ENCODE measurements at regions of chr19 and their contacts with region 1.

Region 1: DNA sequence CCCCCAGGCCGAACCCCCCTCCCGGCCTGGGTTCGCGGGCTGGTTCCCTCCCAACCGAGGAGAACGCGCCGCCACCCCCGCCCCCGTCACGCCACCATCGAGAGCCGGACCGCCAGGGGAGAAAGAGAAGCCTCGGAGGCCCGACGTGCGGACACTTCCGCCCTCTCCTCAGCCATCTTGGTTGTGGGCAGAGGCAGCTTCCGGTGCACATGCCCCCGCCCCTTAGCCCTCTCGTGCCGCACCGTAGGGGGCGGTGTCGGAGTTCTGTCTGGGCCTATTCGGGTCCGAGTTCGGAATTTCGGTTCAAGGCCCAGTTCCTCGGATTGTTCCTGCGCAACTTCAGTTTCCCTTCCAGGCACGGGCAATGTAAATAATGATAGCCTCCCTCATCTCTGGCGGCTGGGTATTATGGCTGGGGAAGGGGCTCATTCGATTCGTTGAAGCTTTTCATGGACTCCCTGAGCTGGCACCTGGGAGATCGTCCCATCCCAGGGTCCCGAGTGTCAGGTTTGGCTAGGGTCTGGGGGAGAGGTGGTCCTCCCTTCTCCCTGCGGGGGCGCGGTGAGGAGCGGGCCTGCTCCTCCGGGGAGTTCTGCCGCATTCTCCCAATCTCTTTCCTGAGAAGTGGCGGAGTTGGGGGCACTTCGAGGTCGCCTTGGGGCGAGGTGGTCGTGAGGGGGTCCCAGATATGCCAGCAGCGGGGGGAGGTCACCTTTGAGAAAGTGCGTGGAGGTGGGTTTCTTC is at the starts of genes IER2 and STX10:
- DNase-seq: peak in 1 of 2 experiments; percentile 91
- H3K4me3 ChIP-seq: peak within 1 kb of the TSS; percentile 87 to 97 (median 94)
- H3K27ac ChIP-seq: peak within 1 kb of the TSS; percentile 79
- H3K4me1 ChIP-seq: peaks cover 0 to 6% (median 3%) of the 10 kb centered on the region in 4 experiments; a peak in 3 of 7 replicates
- H3K27me3 ChIP-seq: no peaks in the 10 kb centered on the region; a peak in 1 of 7 replicates
- CTCF ChIP-seq: peak in 1 of 3 experiments; percentile 33; a peak in 2 of 4 replicates
- EP300 ChIP-seq: peak in 1 of 2 experiments; percentile 43; a peak in 1 of 3 replicates
- POLR2A ChIP-seq: no peak; a peak in 1 of 3 replicates
- RAD21 ChIP-seq: peak; percentile 12 to 18; a peak in 2 of 4 replicates
- total RNA-seq, gene IER2: 137 and 138 TPM in 2 replicates
- total RNA-seq, gene STX10: 50.8 and 53.0 TPM in 2 replicates

Region 2: GRCh38 chr19:12956446-12957388 is 193.6 kb before region 1 on chr19 and contains the start of gene GADD45GIP1:
- CTCF ChIA-PET with region 1: no interaction called
- POLR2A ChIA-PET with region 1: no interaction called
- DNase-seq: peak; percentile 38 to 89
- H3K4me3 ChIP-seq: peak within 1 kb of the TSS; percentile 82 to 91 (median 88)
- H3K27ac ChIP-seq: peak within 1 kb of the TSS; percentile 94
- H3K4me1 ChIP-seq: peaks cover 0 to 4% (median 2%) of the 10 kb centered on the region in 4 experiments; a peak in 3 of 7 replicates
- H3K27me3 ChIP-seq: no peaks in the 10 kb centered on the region
- CTCF ChIP-seq: no peak
- EP300 ChIP-seq: no peak
- POLR2A ChIP-seq: peak; percentile 96 to 97
- RAD21 ChIP-seq: no peak
- total RNA-seq, gene GADD45GIP1: 42.2 and 45.5 TPM in 2 replicates

Region 3: GRCh38 chr19:13104360-13104847 is 46.0 kb before region 1 on chr19:
- CTCF ChIA-PET with region 1: interaction called, 6 read pairs
- POLR2A ChIA-PET with region 1: interaction called, 18 read pairs
- DNase-seq: peak in 1 of 2 experiments; percentile 95
- H3K4me3 ChIP-seq: no peak overlapping the region
- H3K27ac ChIP-seq: no peak overlapping the region
- H3K4me1 ChIP-seq: peaks cover 0 to 23% (median 9%) of the 10 kb centered on the region in 4 experiments; a peak in 5 of 7 replicates
- H3K27me3 ChIP-seq: peaks cover 16 to 34% (median 28%) of the 10 kb centered on the region in 4 experiments
- CTCF ChIP-seq: peak; percentile 83 to 95 (median 86)
- EP300 ChIP-seq: no peak
- POLR2A ChIP-seq: no peak; a peak in 1 of 3 replicates
- RAD21 ChIP-seq: peak; percentile 34 to 58

Region 4: DNA sequence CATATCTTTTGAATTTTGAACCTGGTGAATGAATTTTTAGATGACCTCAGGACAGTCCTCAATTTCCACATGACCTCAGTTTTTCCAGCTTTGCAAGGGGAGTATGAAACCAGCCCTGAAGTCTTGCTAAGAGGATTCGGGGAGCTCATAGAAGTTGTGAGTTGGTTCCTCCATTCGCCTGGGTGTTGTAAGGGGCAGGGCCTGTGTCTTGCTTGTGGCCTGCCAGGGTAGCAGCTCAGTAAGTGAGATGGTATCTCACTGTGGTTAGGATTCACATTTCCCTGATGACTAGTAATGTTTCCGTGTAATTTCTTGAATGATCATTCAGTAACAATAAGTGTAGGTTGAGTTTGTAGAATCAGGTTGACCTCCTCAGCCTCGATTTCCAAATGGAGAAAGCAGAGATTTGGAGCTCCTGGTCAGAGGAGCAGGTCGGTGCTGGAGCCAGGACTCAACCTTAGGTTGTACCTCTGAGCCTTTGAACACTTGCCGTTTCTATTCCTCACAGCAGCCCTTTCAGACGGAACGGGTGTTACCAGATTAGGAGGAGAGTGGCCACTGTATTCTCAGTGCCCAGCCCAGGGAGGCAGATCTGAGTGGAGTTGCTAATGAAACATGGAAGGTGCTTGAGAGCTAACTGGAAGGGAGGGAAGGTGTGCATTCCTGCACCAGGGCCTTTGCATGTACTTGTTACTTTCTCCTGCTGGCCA is 17.7 kb before region 1 on chr19:
- CTCF ChIA-PET with region 1: interaction called, 5 read pairs
- POLR2A ChIA-PET with region 1: interaction called, 35 read pairs
- DNase-seq: no peak
- H3K4me3 ChIP-seq: no peak overlapping the region
- H3K27ac ChIP-seq: no peak overlapping the region
- H3K4me1 ChIP-seq: no peaks in the 10 kb centered on the region
- H3K27me3 ChIP-seq: no peaks in the 10 kb centered on the region
- CTCF ChIP-seq: no peak
- EP300 ChIP-seq: no peak
- POLR2A ChIP-seq: no peak
- RAD21 ChIP-seq: no peak

Region 5: DNA sequence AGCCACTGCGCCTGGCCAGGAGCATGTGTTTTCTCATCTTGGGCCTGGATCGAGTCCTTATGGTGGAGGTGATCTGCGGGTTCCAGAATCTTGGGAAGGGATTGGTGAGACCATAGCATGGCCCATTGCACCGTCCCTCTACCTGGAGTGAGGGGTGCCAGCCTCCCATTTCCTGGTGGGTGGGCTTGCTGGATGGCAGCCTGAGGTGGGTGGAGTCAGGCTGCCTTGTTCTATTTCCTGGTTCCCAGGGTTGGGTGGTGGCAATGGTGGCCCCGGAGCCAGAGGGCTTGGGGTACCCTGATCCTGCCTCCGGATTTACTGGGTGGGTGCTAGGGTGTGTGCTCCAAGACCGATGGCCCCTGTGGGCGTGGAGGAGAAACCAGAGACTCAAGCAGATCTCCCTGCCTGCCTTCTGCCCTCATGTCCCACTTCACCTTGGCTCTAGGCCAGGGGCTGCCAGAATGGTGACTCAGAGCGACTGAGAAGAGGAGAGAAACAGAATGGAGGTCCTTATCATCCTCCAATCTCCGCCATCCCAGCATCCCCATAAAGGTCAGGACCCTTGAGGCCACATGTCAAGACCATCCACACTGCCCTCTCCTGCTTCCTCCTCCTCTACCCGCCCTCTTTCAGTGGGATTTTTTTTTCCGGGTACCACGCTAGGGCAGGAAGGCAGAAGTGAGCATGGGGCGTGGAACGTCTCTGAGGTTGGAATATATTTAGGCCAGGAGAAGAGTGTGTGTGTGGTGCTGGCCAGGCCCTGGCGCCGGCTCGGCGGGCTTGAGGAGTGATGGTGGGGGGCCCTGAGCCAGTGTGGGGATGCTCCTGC is 21.9 kb after region 1 on chr19:
- CTCF ChIA-PET with region 1: interaction called, 6 read pairs
- POLR2A ChIA-PET with region 1: interaction called, 530 read pairs
- DNase-seq: no peak
- H3K4me3 ChIP-seq: no peak overlapping the region
- H3K27ac ChIP-seq: no peak overlapping the region
- H3K4me1 ChIP-seq: peaks cover under 1 to 5% (median 4%) of the 10 kb centered on the region in 4 experiments; a peak in 5 of 7 replicates
- H3K27me3 ChIP-seq: no peaks in the 10 kb centered on the region
- CTCF ChIP-seq: no peak
- EP300 ChIP-seq: no peak
- POLR2A ChIP-seq: no peak
- RAD21 ChIP-seq: no peak

Region 6: GRCh38 chr19:13189600-13189999 is 39.2 kb after region 1 on chr19:
- CTCF ChIA-PET with region 1: interaction called, 9 read pairs
- POLR2A ChIA-PET with region 1: interaction called, 39 read pairs
- DNase-seq: no peak
- H3K4me3 ChIP-seq: no peak overlapping the region
- H3K27ac ChIP-seq: no peak overlapping the region
- H3K4me1 ChIP-seq: no peaks in the 10 kb centered on the region; a peak in 2 of 7 replicates
- H3K27me3 ChIP-seq: no peaks in the 10 kb centered on the region
- CTCF ChIP-seq: no peak
- EP300 ChIP-seq: no peak
- POLR2A ChIP-seq: no peak
- RAD21 ChIP-seq: no peak